SK-N-SH (cell line): ENCODE measurements at regions of chr15 and their contacts with region 1.

Region 1: GRCh38 chr15:40217159-40217824 is 21.6 kb upstream of the PAK6 start:
- DNase-seq: peak; percentile 71
- H3K4me3 ChIP-seq: no peak overlapping the region; a peak in 1 of 4 replicates
- H3K27ac ChIP-seq: no peak overlapping the region
- H3K4me1 ChIP-seq: no peaks in the 10 kb centered on the region
- H3K27me3 ChIP-seq: no peaks in the 10 kb centered on the region
- CTCF ChIP-seq: peak; percentile 89
- EP300 ChIP-seq: no peak
- RAD21 ChIP-seq: peak; percentile 95

Region 2: DNA sequence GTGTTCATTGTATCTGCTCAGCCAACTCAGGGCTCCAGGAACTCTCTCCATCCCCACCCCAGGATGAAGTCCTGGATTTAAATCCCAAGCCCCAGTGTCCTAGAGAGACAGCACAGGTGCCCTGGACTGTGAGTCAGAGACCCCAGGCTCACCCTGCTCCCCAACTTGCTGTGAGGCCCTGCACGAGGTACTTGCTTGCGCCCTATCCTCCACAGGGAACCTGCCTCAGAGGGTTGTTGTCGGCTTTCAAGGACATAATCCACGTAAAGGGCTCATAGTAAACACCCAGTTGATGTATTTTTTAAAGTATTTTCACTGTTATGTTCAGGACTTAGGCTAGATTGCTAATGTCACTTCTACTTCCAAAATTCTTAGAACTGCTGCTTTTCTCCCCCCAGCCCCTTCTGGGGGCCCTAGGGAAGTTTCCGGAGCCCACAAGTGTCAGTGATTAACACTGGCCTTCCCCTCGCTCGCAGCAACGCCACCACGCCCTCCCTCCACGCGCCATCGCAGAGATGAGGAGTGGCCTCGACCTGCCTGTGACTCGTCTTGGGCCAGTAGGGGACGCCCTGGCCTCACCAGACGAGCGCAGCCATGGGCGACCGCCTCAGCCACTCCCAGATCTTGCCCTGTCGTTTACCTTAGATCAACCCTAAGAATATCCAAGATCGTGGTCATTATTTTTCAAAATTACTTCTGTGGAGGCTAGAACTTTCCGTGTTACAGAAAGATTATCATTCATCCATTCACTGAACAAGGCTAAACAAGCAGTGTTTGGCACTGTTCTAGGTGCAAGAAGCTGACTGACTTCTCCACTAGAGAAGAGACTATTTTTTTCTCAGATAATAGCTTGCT is 172.3 kb before region 1 on chr15:
- CTCF ChIA-PET with region 1: interaction called, 16 read pairs
- POLR2A ChIA-PET with region 1: no interaction called
- DNase-seq: peak; percentile 92
- H3K4me3 ChIP-seq: peak overlapping the region; percentile 25 to 51; a peak in 3 of 4 replicates
- H3K27ac ChIP-seq: no peak overlapping the region; a peak in 2 of 4 replicates
- H3K4me1 ChIP-seq: peaks cover 23 to 29% of the 10 kb centered on the region in 2 experiments
- H3K27me3 ChIP-seq: no peaks in the 10 kb centered on the region
- CTCF ChIP-seq: peak; percentile 95
- EP300 ChIP-seq: no peak
- RAD21 ChIP-seq: peak; percentile 97

Region 3: DNA sequence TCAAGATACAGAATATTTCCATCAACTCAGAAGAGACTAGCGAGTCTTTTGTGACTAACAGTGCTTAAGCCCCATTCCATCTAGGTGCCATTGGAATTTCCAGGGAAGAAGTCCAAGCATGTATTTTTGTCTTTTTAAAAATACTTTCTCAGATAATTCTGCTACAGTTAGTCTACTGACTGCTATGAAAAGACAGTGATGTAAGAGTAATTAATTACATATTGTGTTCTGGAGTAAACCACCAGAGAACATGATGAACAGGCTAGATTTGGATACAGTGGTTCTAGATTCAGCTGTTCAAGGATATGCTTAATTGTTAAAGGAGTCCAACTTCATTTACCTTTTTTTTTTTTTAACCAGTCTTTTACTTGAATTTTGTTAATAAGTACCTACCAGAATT is 13.2 kb before region 1 on chr15:
- CTCF ChIA-PET with region 1: interaction called, 37 read pairs
- POLR2A ChIA-PET with region 1: no interaction called
- DNase-seq: no peak
- H3K4me3 ChIP-seq: no peak overlapping the region
- H3K27ac ChIP-seq: no peak overlapping the region
- H3K4me1 ChIP-seq: no peaks in the 10 kb centered on the region; a peak in 1 of 4 replicates
- H3K27me3 ChIP-seq: no peaks in the 10 kb centered on the region
- CTCF ChIP-seq: no peak
- EP300 ChIP-seq: no peak
- RAD21 ChIP-seq: no peak

Region 4: DNA sequence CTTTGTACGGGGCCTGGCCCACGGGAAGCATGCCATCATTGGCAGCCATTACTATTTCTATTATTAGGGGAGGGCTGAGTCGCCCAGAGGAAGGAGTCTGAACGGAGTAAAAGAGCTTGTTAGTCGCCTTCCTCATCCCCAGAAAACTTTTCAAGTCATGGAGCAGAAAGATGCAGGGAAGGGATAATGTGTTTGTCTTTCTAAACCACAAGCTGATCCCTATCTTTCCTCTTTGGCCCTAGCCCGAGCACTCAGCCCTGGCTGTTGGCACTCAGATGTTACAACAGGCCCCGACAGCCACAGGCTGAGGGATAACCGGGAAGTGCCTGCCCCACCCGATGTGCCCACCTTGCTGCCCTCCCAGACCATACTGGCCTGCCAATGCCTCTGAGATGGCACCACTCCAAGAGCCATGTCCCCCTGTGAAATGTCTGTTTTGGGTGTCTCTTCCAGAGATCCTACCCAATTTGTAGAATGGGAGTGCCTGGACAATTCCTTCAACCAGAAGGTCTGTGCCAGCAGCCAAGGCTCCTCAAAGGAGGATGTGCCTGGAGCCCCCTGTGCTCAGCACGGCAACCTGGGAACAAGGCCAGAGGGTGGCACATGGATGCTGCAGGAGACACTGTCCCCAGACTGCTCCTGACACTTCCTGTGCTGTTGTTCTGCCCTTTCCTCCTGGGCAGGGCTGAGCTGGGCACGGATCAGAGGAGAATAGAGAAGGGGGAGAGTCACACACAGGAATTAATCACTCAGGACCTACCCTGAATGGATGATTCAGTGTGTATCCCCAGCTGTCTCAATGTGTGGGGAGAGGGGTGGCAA is 32.4 kb after region 1 on chr15:
- CTCF ChIA-PET with region 1: interaction called, 33 read pairs
- POLR2A ChIA-PET with region 1: interaction called, 3 read pairs
- DNase-seq: peak; percentile 70
- H3K4me3 ChIP-seq: no peak overlapping the region
- H3K27ac ChIP-seq: peak overlapping the region; percentile 17 to 77; a peak in 3 of 4 replicates
- H3K4me1 ChIP-seq: peaks cover 13 to 35% of the 10 kb centered on the region in 2 experiments
- H3K27me3 ChIP-seq: peaks cover 30% of the 10 kb centered on the region
- CTCF ChIP-seq: no peak
- EP300 ChIP-seq: peak in 1 of 2 experiments; percentile 26; a peak in 1 of 4 replicates
- RAD21 ChIP-seq: no peak

Region 5: DNA sequence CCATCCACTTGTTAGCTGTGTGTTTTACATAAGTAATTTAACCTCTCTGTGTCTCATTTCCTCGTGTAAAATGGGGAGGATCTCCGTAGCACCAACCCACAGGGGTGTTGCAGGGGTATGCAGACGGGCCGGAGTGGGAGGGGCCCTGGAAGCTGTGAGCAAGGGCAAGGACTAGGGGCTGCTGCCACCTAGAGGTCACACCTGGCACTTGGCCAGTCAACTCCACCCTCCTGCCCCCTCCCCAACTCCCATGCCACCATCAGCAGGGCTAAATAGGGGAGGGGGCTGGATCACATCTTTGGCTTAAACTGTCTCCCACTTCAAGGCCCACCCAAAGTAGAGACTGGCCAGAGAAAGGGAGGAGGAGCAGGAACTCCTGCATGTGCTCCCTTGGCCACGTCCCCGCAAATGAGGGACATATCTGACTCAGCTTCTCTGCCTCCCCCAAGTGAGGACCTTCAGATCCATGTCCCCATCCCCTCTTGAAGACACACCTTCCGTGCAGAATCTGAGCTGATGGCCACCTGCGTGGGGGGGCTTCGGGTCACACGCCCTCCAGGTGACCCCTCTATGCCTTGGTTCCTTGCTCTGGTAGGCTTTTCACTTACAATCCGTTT is 120.9 kb after region 1 on chr15:
- CTCF ChIA-PET with region 1: interaction called, 10 read pairs
- POLR2A ChIA-PET with region 1: no interaction called
- DNase-seq: peak; percentile 95
- H3K4me3 ChIP-seq: peak overlapping the region; percentile 51 to 77; a peak in 2 of 4 replicates
- H3K27ac ChIP-seq: peak overlapping the region; percentile 96 to 98; a peak in 3 of 4 replicates
- H3K4me1 ChIP-seq: peaks cover 56 to 62% of the 10 kb centered on the region in 2 experiments; a peak in 3 of 4 replicates
- H3K27me3 ChIP-seq: no peaks in the 10 kb centered on the region
- CTCF ChIP-seq: peak; percentile 89
- EP300 ChIP-seq: no peak
- RAD21 ChIP-seq: peak; percentile 81